ENCODE measurements at regions of chr1 and their contacts with region 1.

Region 1: DNA sequence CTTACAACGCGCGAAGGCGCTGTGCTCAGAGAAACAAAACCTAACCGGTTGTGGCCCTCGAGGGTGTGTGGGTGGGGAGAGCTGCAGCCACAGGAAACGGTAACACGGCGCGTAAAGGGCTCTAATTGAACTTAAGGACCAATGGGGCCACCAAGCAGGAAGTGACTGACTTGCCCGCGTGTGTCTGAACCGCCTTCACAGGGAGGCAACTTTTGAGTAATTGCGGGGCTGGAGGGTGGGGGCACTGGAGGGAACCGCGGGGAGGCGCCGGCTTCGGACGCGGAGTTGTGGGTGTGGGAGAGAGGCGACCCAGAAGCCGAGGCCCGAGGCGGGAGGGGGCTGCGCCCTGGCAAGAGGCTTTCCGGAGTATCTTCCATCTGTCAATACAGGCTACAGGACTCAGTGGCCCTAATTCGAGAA is 577 bp upstream of the PNRC2 start:
- DNase-seq: peak; percentile 98
- H3K4me3 Mint-ChIP-seq: peak overlapping the region; percentile 99
- H3K27ac Mint-ChIP-seq: peak overlapping the region; percentile 100
- H3K4me1 Mint-ChIP-seq: peaks cover 59% of the 10 kb centered on the region
- H3K27me3 Mint-ChIP-seq: no peaks in the 10 kb centered on the region

Region 2: GRCh38 chr1:23559136-23559984 is 399.7 kb before region 1 on chr1 and contains the start of gene ID3:
- CTCF ChIA-PET with region 1: no interaction called
- intact Hi-C with region 1: loop called (anchors 10 kb)
- DNase-seq: peak; percentile 94
- H3K4me3 Mint-ChIP-seq: peak within 1 kb of the TSS; percentile 82
- H3K27ac Mint-ChIP-seq: peak within 1 kb of the TSS; percentile 84
- H3K4me1 Mint-ChIP-seq: peaks cover 62% of the 10 kb centered on the region
- H3K27me3 Mint-ChIP-seq: peaks cover 3% of the 10 kb centered on the region
- total RNA-seq, gene ID3: 69.5 to 74.6 TPM

Region 3: GRCh38 chr1:23634842-23635651 is 324.0 kb before region 1 on chr1:
- CTCF ChIA-PET with region 1: no interaction called
- intact Hi-C with region 1: no loop called
- DNase-seq: peak; percentile 78
- H3K4me3 Mint-ChIP-seq: peak overlapping the region; percentile 41
- H3K27ac Mint-ChIP-seq: peak overlapping the region; percentile 68
- H3K4me1 Mint-ChIP-seq: peaks cover 27% of the 10 kb centered on the region
- H3K27me3 Mint-ChIP-seq: no peaks in the 10 kb centered on the region

Region 4: DNA sequence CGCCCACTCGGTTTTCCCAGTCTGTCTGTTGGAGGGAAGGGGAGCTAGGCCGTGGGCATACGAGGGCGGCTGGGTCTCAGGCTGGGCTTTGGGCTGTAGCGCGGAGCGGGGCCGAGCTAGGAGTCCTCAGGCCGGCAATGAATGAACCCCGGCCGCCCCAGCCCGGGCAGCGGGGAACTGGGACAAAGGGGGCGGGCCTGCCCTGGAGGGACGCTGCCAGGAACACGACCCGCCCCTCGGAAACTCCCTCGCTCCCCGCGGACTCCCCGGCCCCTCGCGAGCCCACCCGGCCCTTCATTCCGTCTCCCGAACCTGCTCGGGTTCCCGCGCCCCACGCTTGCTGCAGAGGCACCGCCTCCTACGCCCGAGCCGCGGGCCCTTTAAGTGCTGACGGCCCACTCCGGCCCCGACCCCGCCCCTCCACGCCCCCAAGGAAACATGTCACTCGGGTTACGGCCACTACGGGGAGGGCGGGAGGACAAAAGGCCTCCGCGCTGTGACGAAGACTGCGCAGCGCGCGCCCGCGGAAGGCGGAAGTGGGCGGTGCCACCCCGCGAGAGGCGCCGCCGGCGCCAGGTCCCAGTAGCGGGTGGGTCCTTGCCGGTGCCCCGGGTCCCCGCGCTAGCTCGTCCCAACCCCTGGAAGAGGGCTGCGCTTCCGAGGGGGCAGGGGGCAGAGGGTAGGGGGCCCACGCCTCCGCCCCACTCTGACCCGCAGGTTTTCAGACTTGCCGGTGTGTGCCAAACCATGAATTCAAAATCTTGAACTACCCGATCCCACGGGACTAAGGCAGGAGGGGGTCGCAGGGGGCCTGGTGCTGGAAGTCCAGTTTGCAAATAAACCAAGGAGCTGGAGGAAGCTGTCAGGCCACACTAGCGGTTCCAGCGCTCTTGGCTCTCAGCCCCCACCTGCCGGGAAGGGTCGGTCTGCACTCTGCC is 158.4 kb before region 1 on chr1 and contains the start of gene GALE:
- CTCF ChIA-PET with region 1: no interaction called
- intact Hi-C with region 1: loop called (anchors 1 kb)
- DNase-seq: peak; percentile 98
- H3K4me3 Mint-ChIP-seq: peak within 1 kb of the TSS; percentile 92
- H3K27ac Mint-ChIP-seq: peak within 1 kb of the TSS; percentile 80
- H3K4me1 Mint-ChIP-seq: peaks cover 11% of the 10 kb centered on the region
- H3K27me3 Mint-ChIP-seq: no peaks in the 10 kb centered on the region
- total RNA-seq, gene GALE: 19.7 to 23.1 TPM

Region 5: DNA sequence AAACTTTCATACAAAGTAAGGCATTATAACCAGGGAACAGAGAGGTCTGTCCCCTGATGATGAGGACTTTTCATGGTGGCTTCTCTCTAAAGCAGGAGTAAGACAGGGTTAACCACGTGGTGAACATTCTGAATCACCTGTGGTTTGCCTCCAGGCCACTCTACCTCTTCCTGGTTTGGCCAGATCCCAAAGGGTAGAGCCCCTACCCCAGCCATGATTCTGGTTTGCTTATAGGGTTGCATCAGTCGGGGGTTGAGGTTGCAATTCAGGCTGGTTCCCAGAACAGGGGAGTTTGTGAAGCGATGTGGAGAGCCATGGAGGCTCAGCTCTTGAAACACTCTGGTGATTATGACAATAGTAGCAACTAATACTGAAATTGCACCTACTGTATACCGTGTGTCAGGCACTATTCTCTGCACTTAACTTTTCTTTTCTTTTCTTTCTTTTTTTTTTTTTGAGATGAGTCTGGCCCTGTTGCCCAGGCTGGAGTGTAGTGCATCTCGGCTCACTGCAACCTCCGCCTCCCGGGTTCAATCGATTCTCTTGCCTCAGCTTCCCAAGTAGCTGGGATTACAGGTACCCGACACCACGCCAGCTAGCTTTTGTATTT is 54.2 kb before region 1 on chr1:
- CTCF ChIA-PET with region 1: no interaction called
- intact Hi-C with region 1: loop called (anchors 2 kb)
- DNase-seq: peak; percentile 74
- H3K4me3 Mint-ChIP-seq: no peak overlapping the region
- H3K27ac Mint-ChIP-seq: no peak overlapping the region
- H3K4me1 Mint-ChIP-seq: peaks cover 23% of the 10 kb centered on the region
- H3K27me3 Mint-ChIP-seq: peaks cover 4% of the 10 kb centered on the region

Region 6: DNA sequence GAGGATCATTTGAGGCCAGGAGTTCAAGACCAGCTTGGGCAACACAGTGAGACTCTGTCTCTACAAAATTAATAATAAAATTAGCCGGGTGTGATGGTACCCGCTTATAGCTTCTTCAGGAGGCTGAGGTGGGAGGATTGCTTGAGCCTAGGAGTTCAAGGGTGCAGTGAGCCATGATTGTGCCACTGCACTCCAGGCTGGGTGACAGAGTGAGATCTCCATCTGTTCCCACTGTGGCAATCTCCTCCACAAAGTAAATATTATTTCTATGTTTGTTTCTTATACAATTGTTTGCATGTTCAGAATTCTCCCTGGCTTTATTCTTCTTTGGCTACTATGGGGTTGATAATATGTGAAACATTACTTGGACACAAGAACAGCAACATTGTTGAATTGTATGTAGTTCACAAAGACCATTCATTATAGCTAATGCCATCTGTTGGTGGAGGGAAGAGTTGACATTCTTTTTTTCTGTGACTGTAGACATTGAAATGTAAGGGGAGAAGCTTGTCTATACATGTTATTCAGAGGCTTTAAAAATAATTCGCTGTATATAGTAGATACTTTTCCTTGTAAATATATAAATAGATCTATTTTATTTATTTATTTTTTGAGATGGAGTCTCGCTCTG is 68.9 kb after region 1 on chr1:
- CTCF ChIA-PET with region 1: interaction called, 5 read pairs
- intact Hi-C with region 1: loop called (anchors 1 kb)
- DNase-seq: no peak
- H3K4me3 Mint-ChIP-seq: no peak overlapping the region
- H3K27ac Mint-ChIP-seq: no peak overlapping the region
- H3K4me1 Mint-ChIP-seq: no peaks in the 10 kb centered on the region
- H3K27me3 Mint-ChIP-seq: no peaks in the 10 kb centered on the region

Region 7: GRCh38 chr1:24502709-24503058 is 543.6 kb after region 1 on chr1 and contains the start of gene RCAN3:
- CTCF ChIA-PET with region 1: no interaction called
- intact Hi-C with region 1: loop called (anchors 10 kb)
- DNase-seq: peak; percentile 87
- H3K4me3 Mint-ChIP-seq: peak within 1 kb of the TSS; percentile 100
- H3K27ac Mint-ChIP-seq: peak within 1 kb of the TSS; percentile 93
- H3K4me1 Mint-ChIP-seq: peaks cover 49% of the 10 kb centered on the region
- H3K27me3 Mint-ChIP-seq: no peaks in the 10 kb centered on the region
- total RNA-seq, gene RCAN3: 70.8 to 71.9 TPM

Region 8: GRCh38 chr1:24744911-24745710 is 786.1 kb after region 1 on chr1 and contains the start of gene CLIC4:
- CTCF ChIA-PET with region 1: no interaction called
- intact Hi-C with region 1: loop called (anchors 1 kb)
- DNase-seq: peak; percentile 100
- H3K4me3 Mint-ChIP-seq: peak within 1 kb of the TSS; percentile 88
- H3K27ac Mint-ChIP-seq: peak within 1 kb of the TSS; percentile 77
- H3K4me1 Mint-ChIP-seq: peaks cover 52% of the 10 kb centered on the region
- H3K27me3 Mint-ChIP-seq: no peaks in the 10 kb centered on the region
- total RNA-seq, gene CLIC4: 38.0 to 44.3 TPM

Measured in activated naive CD4-positive, alpha-beta T cell treated with anti-CD3 and anti-CD28 coated beads for 36 hours (primary cell).